PC-3 (cell line): ENCODE measurements at regions of chr15 and their contacts with region 1.

Region 1: DNA sequence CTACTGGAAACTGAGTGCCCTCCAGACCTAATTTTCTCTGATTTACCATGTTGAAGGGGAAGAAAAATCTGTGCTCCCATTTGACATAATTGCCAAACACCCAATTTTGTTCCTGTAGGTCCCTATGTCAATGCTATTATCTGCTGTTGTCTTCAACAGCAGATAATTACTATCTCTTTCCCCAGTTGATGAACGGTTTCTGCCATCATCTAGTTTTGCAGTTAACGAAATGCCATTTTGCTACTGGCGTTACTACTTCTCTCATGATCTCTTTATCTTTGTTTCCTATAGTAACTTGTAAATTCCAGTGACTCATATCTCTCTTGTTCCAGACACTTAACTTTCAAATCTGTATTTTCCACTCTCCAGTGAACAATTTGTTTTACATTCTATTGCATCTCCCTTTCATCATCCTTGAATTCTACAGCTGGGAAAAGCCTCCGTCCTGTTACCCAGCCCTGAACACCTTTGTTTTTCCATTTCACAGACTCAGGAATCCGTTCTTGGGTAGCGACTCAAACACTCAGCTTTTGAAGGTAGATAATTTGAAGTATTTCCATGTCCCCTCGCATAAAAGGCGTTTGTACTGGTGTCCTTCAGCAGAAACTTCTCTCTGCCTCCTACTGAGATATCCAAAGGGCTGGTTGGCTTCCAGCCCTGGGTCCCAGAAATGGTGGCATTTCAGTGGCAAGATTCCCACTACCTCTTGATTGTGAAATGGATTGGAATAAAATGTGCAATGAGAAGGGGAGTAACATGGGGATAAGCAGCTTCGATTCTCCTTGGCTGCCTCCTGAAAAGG is 111.7 kb downstream of the FOXB1 start:
- DNase-seq: peak; percentile 28
- ATAC-seq: peak; percentile 71
- H3K4me3 ChIP-seq: no peak overlapping the region
- H3K27ac ChIP-seq: no peak overlapping the region
- H3K4me1 ChIP-seq: peaks cover 16% of the 10 kb centered on the region; the same call in 1 of the 2 replicates
- H3K27me3 ChIP-seq: no peaks in the 10 kb centered on the region
- CTCF ChIP-seq: no peak

Region 2: DNA sequence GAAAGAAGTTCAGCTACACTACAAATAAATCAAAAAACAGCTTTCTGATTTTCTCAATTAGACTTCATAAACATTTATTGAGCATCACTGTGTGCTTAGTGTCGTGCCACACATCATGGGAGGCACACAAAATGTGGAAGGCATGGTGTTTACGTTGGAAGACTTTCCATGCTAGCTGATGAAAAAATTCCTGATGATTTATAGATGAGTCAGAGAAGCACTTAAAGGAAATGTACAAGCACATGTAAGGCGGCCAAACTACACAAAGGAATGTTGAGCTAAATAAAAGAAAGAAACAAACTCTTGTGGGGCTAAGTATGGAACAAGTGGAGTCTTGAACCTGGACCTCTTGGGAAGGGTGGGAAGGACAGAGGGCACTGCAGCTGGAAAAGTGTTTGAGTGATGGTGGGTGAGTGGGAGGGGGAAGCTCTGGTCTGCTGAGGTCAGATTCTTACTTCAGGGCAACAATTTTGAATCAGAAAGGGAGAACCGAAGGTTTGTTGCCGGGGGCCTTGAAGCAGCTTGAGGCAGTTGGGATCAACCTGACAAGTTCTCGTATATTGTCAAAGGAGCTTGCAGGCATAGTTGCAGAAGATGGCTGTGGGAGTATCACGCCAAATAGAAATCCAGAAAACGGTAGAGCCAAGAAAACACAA is 44.8 kb before region 1 on chr15:
- CTCF ChIA-PET with region 1: no interaction called
- POLR2A ChIA-PET with region 1: no interaction called
- intact Hi-C with region 1: loop called (anchors 5 kb)
- DNase-seq: peak; percentile 89
- ATAC-seq: peak; percentile 77
- H3K4me3 ChIP-seq: no peak overlapping the region
- H3K27ac ChIP-seq: peak overlapping the region; percentile 67
- H3K4me1 ChIP-seq: peaks cover 21% of the 10 kb centered on the region
- H3K27me3 ChIP-seq: no peaks in the 10 kb centered on the region
- CTCF ChIP-seq: no peak

Region 3: GRCh38 chr15:60272625-60273024 is 156.8 kb after region 1 on chr15:
- CTCF ChIA-PET with region 1: no interaction called
- POLR2A ChIA-PET with region 1: no interaction called
- intact Hi-C with region 1: no loop called
- DNase-seq: no peak
- ATAC-seq: no peak
- H3K4me3 ChIP-seq: no peak overlapping the region
- H3K27ac ChIP-seq: no peak overlapping the region
- H3K4me1 ChIP-seq: no peaks in the 10 kb centered on the region
- H3K27me3 ChIP-seq: peaks cover 32% of the 10 kb centered on the region
- CTCF ChIP-seq: peak; percentile 36; the same call in 1 of the 2 replicates

Region 4: GRCh38 chr15:60787837-60788691 is 672.3 kb after region 1 on chr15:
- CTCF ChIA-PET with region 1: no interaction called
- POLR2A ChIA-PET with region 1: no interaction called
- intact Hi-C with region 1: no loop called
- DNase-seq: peak; percentile 2
- ATAC-seq: no peak
- H3K4me3 ChIP-seq: no peak overlapping the region
- H3K27ac ChIP-seq: no peak overlapping the region
- H3K4me1 ChIP-seq: no peaks in the 10 kb centered on the region
- H3K27me3 ChIP-seq: peaks cover 38% of the 10 kb centered on the region
- CTCF ChIP-seq: peak; percentile 40; the same call in 1 of the 2 replicates